Upper lobe of right lung (tissue), 1 donor: ENCODE measurements at regions of chr15 and their contacts with region 1.

Region 1: DNA sequence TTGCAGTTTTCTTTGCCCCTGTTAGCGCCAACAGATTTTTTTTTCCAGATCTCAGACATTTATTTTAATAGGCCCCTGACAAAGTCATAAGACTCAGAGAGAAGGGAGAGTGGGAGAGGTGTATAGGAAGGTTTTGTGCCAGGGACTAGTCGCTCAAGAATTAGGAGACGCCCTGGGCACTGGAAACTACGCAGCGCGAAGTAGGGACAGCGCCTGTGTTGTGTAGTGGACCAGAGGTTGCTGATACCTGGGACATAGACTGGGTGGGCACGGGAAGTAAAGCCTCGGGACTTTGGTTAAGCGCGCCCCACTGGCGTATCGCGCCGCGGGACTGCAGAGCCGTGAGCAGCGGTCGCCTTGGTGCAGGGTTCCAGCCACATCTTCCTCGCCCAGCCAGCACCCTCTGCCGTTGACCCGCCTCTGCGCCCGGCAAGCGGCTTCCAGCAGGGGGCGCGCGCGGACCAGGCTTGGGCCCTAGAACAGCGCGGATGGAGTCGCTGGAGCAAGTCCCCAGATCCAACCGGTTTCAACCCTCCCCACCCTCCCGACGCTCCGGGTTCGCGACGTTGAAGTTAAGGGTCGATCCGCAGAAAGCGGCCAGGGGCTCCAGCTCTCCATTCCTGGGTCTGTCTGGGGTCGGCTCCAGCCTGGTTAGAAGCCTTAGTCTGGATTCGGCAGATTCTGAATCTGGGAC is 3.0 kb upstream of the ISLR2 start:
- DNase-seq: peak; percentile 93
- ATAC-seq: peak; percentile 93
- H3K4me3 ChIP-seq: peak overlapping the region; percentile 32
- H3K27ac ChIP-seq: no peak overlapping the region
- H3K4me1 ChIP-seq: peaks cover 15% of the 10 kb centered on the region
- H3K27me3 ChIP-seq: peaks cover 76% of the 10 kb centered on the region
- CTCF ChIP-seq: peak; percentile 97

Region 2: DNA sequence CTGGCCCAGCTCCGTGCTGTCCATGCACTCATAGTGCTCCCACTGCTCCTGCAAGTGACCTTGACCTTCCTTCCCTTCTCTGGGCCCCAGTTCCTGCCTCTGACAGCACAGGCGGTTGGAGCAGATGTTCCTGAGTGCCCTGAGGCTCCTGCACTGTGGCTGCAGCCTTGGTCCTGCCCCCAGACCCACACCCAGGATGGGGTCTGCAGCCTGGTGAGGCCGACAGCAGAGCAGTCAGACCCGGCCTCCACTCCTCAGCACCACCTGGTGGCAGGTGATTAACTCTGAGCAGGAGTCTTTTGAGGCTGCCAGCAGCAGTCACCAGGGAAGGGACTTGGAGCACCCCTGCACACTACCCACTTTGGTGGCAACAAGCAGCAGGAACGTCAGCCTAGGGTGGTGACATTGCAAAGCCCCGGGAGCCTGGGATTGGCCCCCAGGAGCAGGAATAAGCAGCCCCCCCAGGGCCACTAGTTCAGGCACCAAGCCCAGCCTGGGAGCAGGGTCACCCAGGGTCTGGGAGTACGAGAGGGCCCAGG is 175.5 kb after region 1 on chr15:
- intact Hi-C with region 1: loop called (anchors 5 kb)
- DNase-seq: no peak
- ATAC-seq: peak; percentile 31
- H3K4me3 ChIP-seq: no peak overlapping the region
- H3K27ac ChIP-seq: no peak overlapping the region
- H3K4me1 ChIP-seq: no peaks in the 10 kb centered on the region
- H3K27me3 ChIP-seq: peaks cover 49% of the 10 kb centered on the region
- CTCF ChIP-seq: peak; percentile 47

Region 3: GRCh38 chr15:74311734-74312408 is 184.5 kb after region 1 on chr15:
- intact Hi-C with region 1: loop called (anchors 5 kb)
- DNase-seq: no peak
- ATAC-seq: no peak
- H3K4me3 ChIP-seq: no peak overlapping the region
- H3K27ac ChIP-seq: no peak overlapping the region
- H3K4me1 ChIP-seq: peaks cover 2% of the 10 kb centered on the region
- H3K27me3 ChIP-seq: peaks cover 21% of the 10 kb centered on the region
- CTCF ChIP-seq: peak; percentile 26